Astrocyte of the cerebellum (primary cell): ENCODE measurements at regions of chr9 and their contacts with region 1.

Region 1: GRCh38 chr9:103335461-103335860 is 340.3 kb downstream of the CYLC2 start:
- DNase-seq: no peak
- H3K4me3 ChIP-seq: no peak overlapping the region
- CTCF ChIP-seq: no peak

Region 2: GRCh38 chr9:103377667-103378066 is 42.2 kb after region 1 on chr9:
- in situ Hi-C with region 1: loop called (anchors 5 kb)
- DNase-seq: no peak
- H3K4me3 ChIP-seq: no peak overlapping the region
- CTCF ChIP-seq: no peak

Region 3: DNA sequence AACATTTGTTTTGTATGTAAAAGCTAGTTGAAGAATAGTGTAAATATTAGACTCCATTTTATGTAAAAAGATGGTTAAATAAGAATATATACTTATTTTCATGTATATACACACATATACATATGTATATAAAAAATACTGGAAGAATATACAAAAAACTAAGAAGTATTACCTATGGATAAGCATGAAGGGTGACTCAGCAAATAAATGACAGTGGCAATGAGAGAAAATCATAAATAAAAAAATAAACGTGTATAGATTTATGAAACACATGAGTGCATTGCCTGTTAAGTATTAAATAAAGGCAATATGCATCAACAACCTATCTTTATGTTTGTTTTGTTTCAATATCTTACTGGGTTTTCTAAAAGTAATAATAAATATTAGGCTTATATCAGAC is 95.0 kb after region 1 on chr9:
- in situ Hi-C with region 1: no loop called
- DNase-seq: no peak
- H3K4me3 ChIP-seq: no peak overlapping the region
- CTCF ChIP-seq: no peak